Activated CD4-positive, alpha-beta T cell treated with anti-CD3 and anti-CD28 coated beads, Interleukin-2, amount 10 ng/mL, durations not matched to agents 24 days and 14 days (primary cell): ENCODE measurements at regions of chr1 and their contacts with region 1.

Region 1: DNA sequence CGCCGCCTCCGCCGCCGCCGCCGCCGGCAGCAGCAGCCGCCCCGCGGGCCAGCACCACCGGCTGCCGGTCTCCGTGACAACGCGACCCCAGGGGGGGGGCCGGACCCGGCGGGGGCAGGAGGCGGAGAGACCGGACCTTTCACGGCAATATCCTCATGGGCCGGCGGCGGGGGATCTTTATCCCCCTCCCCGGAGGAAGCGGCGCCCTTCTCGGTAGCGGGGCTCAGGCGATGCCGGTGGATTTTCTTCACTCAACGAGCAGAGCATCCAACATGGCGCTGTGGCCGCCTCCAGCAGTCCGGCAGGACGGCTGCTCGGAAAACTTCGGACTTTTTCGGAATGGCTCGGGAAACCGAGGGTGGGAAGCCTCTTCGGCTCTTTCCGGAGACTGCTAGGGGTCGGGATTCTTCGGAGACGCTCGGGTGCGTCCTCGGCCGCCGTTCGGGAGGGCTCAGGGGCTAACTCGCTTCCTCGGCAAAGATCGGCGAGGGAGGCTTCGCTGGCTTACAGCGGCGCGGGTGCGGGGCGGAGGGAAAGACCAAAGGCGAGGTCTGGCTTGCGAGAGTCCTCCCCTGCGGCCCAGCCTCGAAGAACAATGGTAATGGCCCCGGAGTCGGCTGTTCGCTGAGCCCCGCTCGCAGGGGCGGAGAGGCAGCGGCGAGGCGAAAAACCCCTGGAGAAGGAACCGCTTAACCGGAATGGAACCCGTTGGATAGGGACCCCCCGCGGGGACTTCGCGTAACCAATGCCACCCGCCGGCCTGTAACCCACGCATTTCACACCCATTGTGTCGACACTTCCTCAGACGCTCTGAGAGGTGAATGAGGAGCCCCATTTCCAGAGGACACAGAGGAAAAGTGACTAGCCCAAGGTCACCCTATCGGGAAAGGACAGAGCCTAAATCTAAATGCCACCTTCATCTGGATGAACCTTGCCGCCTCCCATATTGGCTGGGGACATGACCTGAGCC is at the start of gene EIF4G3:
- DNase-seq: peak; percentile 100
- H3K4me3 Mint-ChIP-seq: peak within 1 kb of the TSS; percentile 89
- H3K27ac Mint-ChIP-seq: peak within 1 kb of the TSS; percentile 91
- H3K4me1 Mint-ChIP-seq: peaks cover 20% of the 10 kb centered on the region
- H3K27me3 Mint-ChIP-seq: peaks cover 2% of the 10 kb centered on the region
- total RNA-seq, gene EIF4G3: 64.0 and 66.8 TPM in 2 replicates

Region 2: DNA sequence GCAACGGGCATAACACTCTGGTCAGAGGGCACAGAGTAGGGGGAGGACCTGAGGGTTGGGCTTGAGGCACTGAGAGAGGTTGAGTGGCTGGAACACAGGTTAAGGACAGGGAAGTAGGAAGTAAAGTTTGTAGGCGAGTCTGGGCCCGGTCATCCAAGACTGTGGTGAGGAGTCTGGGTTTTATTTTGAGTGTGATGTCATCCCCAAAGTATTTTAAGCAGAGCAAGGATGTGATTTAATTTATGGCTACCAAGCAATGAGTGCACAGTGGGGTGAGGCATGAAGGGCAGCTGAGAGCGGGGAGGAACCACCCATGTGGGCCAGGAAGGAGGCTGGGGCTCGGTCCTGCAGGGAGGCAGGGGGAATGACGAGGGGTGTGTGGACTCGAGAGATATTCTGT is 897.4 kb before region 1 on chr1:
- intact Hi-C with region 1: no loop called
- DNase-seq: no peak
- H3K4me3 Mint-ChIP-seq: no peak overlapping the region
- H3K27ac Mint-ChIP-seq: no peak overlapping the region
- H3K4me1 Mint-ChIP-seq: no peaks in the 10 kb centered on the region
- H3K27me3 Mint-ChIP-seq: peaks cover 20% of the 10 kb centered on the region

Region 3: GRCh38 chr1:20992322-20993056 is 184.4 kb before region 1 on chr1:
- intact Hi-C with region 1: loop called (anchors 5 kb)
- DNase-seq: peak; percentile 51
- H3K4me3 Mint-ChIP-seq: peak overlapping the region; percentile 62
- H3K27ac Mint-ChIP-seq: peak overlapping the region; percentile 91
- H3K4me1 Mint-ChIP-seq: peaks cover 26% of the 10 kb centered on the region
- H3K27me3 Mint-ChIP-seq: no peaks in the 10 kb centered on the region